ENCODE measurements at regions of chr3 and their contacts with region 1.

Region 1: DNA sequence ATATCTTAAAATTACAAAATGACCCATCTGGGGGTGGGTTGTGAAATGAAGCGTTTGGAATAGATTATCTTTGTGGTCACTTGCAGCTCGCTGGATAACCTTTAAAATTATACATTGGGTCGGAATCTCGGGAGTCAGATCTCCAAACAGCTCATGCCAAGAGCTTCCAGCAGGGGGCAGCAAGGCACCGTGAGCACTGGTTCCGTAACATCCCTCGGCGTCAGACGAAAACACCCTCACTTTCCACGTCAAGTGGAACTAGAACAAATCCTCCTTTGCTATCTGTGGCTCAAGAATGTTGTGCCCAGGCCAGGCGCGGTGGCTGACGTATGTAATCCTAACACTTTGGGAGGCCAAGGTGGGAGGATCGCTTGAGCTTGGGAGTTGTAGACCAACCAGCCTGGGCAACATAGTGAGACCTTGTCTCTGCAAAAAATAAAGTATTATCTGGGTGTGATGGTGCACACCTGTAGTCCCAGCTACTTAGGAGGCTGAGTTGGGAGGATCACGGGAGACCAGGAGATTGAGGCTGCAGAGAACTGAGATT is 31.1 kb downstream of the UMPS start:
- H3K4me3 ChIP-seq: no peak overlapping the region
- H3K27ac ChIP-seq: no peak overlapping the region
- H3K4me1 ChIP-seq: no peaks in the 10 kb centered on the region
- CTCF ChIP-seq: peak; percentile 75

Region 2: GRCh38 chr3:124351430-124352148 is 409.7 kb before region 1 on chr3:
- CTCF ChIA-PET with region 1: no interaction called
- POLR2A ChIA-PET with region 1: no interaction called
- H3K4me3 ChIP-seq: no peak overlapping the region
- H3K27ac ChIP-seq: no peak overlapping the region
- H3K4me1 ChIP-seq: no peaks in the 10 kb centered on the region
- CTCF ChIP-seq: no peak

Region 3: GRCh38 chr3:124786441-124787241 is 25.3 kb after region 1 on chr3:
- CTCF ChIA-PET with region 1: interaction called, 16 read pairs
- POLR2A ChIA-PET with region 1: no interaction called
- H3K4me3 ChIP-seq: no peak overlapping the region
- H3K27ac ChIP-seq: no peak overlapping the region
- H3K4me1 ChIP-seq: no peaks in the 10 kb centered on the region
- CTCF ChIP-seq: no peak

Region 4: DNA sequence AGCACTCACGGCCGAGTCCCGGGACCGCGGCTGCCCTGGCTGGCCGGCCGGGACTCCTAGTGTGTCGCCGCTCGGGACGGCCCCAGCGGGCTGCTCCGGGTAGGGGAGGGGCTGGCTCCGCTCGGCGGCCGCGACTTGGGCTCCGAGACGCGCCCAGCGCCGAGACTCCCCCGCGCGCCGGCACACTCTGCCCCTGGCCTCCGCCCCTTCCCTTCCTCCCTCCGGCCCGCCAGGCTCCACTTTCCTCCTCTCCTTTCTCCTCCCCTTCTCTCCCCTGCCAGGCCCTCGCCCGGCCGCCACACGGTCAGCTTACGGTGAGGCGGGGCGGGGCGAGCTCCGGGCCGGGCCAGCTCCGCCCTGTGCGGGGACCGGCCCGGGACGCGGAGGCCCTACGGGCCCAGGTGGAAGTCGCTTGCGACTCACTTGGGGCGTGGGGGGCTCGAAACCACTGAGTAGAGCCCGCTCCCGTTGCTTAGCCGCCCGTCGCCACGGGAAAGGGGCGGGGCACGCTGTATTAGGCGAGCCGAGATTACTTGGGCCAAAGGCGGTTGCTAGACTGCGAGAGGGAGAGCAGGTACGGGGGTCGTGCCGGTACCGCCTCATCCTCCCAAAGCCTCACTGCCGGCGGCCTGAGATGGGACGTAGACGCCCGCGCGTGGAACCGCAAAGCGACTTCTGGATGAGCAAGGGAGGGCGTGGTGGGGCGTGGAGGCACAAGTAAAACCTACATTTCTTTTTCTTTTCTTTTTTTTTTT is 126.0 kb after region 1 on chr3 and contains the start of gene ITGB5:
- CTCF ChIA-PET with region 1: interaction called, 11 read pairs
- POLR2A ChIA-PET with region 1: no interaction called
- H3K4me3 ChIP-seq: peak within 1 kb of the TSS; percentile 58
- H3K27ac ChIP-seq: peak within 1 kb of the TSS; percentile 74; the same call in 1 of the 2 replicates
- H3K4me1 ChIP-seq: no peaks in the 10 kb centered on the region
- CTCF ChIP-seq: peak; percentile 27; the same call in 1 of the 2 replicates

Region 5: GRCh38 chr3:124928333-124929202 is 167.2 kb after region 1 on chr3:
- CTCF ChIA-PET with region 1: interaction called, 13 read pairs
- POLR2A ChIA-PET with region 1: no interaction called
- H3K4me3 ChIP-seq: no peak overlapping the region
- H3K27ac ChIP-seq: no peak overlapping the region
- H3K4me1 ChIP-seq: no peaks in the 10 kb centered on the region
- CTCF ChIP-seq: no peak